Activated CD4-positive, alpha-beta memory T cell treated with anti-CD3 and anti-CD28 coated beads for 36 hours (primary cell): ENCODE measurements at regions of chr2 and their contacts with region 1.

Region 1: GRCh38 chr2:264660-265468 is at the start of gene ACP1:
- DNase-seq: peak; percentile 96
- H3K4me3 Mint-ChIP-seq: peak within 1 kb of the TSS; percentile 91
- H3K27ac Mint-ChIP-seq: peak within 1 kb of the TSS; percentile 93
- H3K4me1 Mint-ChIP-seq: peaks cover 44% of the 10 kb centered on the region
- H3K27me3 Mint-ChIP-seq: no peaks in the 10 kb centered on the region
- total RNA-seq, gene ACP1: 121 to 127 TPM

Region 2: DNA sequence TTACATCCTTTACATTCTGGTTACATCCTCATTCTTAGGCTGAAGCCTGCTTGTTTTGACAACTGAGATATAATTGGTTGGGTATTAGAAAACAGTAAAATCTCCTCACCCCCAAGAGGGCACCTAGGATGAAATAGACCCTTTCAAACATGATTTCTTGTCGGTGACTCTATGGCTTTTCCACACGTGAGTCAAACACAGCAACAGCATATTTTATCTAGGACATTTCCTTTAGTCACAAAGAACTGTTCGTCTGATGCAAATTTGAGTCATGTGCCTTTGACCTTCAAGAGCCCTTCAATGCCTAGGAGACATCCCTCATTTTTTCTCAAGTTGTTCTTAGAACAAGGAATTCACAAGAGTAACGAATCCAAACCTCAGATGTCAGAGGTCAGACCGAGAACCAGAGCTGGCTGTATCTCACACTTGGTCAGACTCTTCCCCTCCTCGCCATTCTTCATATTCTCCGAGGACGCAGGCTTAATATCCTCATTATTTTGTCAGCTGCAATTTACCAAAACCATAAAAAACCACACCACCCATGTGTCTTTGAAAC is 83.6 kb after region 1 on chr2:
- CTCF ChIA-PET with region 1: no interaction called
- POLR2A ChIA-PET with region 1: no interaction called
- intact Hi-C with region 1: no loop called
- DNase-seq: no peak
- H3K4me3 Mint-ChIP-seq: no peak overlapping the region
- H3K27ac Mint-ChIP-seq: no peak overlapping the region
- H3K4me1 Mint-ChIP-seq: peaks cover under 1% of the 10 kb centered on the region
- H3K27me3 Mint-ChIP-seq: peaks cover 25% of the 10 kb centered on the region

Region 3: GRCh38 chr2:677056-677965 is 412.4 kb after region 1 on chr2 and contains the start of gene TMEM18:
- CTCF ChIA-PET with region 1: no interaction called
- POLR2A ChIA-PET with region 1: no interaction called
- intact Hi-C with region 1: loop called (anchors 1 kb)
- DNase-seq: peak; percentile 93
- H3K4me3 Mint-ChIP-seq: peak within 1 kb of the TSS; percentile 95
- H3K27ac Mint-ChIP-seq: peak within 1 kb of the TSS; percentile 99
- H3K4me1 Mint-ChIP-seq: peaks cover 38% of the 10 kb centered on the region
- H3K27me3 Mint-ChIP-seq: no peaks in the 10 kb centered on the region
- total RNA-seq, gene TMEM18: 20.8 to 21.8 TPM